Vagina (tissue), 2 donors: ENCODE measurements at regions of chr7 and their contacts with region 1.

Region 1: GRCh38 chr7:64618785-64619456 is 47.0 kb upstream of the ZNF107 start:
- DNase-seq: no peak
- H3K4me3 ChIP-seq: no peak overlapping the region
- H3K27ac ChIP-seq: no peak overlapping the region
- H3K4me1 ChIP-seq: no peaks in the 10 kb centered on the region
- H3K27me3 ChIP-seq: no peaks in the 10 kb centered on the region
- CTCF ChIP-seq: peak; percentile 44 to 69 (median 52)
- POLR2A ChIP-seq: no peak

Region 2: GRCh38 chr7:64183126-64183742 is 435.7 kb before region 1 on chr7:
- intact Hi-C with region 1: loop called (anchors 10 kb)
- DNase-seq: no peak
- H3K4me3 ChIP-seq: no peak overlapping the region
- H3K27ac ChIP-seq: no peak overlapping the region
- H3K4me1 ChIP-seq: no peaks in the 10 kb centered on the region
- H3K27me3 ChIP-seq: no peaks in the 10 kb centered on the region
- CTCF ChIP-seq: peak; percentile 28 to 60 (median 52)
- POLR2A ChIP-seq: no peak

Region 3: GRCh38 chr7:64562626-64563275 is 56.2 kb before region 1 on chr7 and contains the start of gene ZNF680:
- intact Hi-C with region 1: no loop called
- DNase-seq: peak in 1 of 2 donors; percentile 99
- H3K4me3 ChIP-seq: peak within 1 kb of the TSS; percentile 77 to 80
- H3K27ac ChIP-seq: peak within 1 kb of the TSS; percentile 86
- H3K4me1 ChIP-seq: peaks cover 46% of the 10 kb centered on the region
- H3K27me3 ChIP-seq: no peaks in the 10 kb centered on the region
- CTCF ChIP-seq: no peak
- POLR2A ChIP-seq: peak in 1 of 2 donors; percentile 61
- total RNA-seq, gene ZNF680: 22.1 TPM

Region 4: GRCh38 chr7:64581926-64582894 is 36.7 kb before region 1 on chr7:
- intact Hi-C with region 1: no loop called
- DNase-seq: no peak
- H3K4me3 ChIP-seq: no peak overlapping the region
- H3K27ac ChIP-seq: no peak overlapping the region
- H3K4me1 ChIP-seq: no peaks in the 10 kb centered on the region
- H3K27me3 ChIP-seq: no peaks in the 10 kb centered on the region
- CTCF ChIP-seq: no peak
- POLR2A ChIP-seq: no peak

Region 5: DNA sequence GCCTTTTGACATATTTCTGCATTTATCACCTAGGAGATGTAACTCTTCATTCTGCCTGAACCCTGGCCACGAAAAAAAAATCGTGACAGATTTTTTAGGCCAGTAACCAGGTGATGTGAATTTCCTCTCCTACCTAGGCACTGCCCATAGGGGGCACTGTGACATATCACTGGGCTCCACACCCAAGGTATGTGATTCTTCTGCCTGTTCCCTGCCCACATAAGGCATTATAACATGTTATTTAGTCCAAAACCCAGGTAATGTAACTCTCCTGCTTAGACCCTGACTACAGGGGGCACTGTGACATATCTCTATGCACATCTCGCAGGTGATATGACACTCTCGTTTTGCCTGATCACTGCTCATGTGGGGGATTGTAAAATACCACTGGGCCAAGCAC is 17.5 kb after region 1 on chr7:
- intact Hi-C with region 1: no loop called
- DNase-seq: no peak
- H3K4me3 ChIP-seq: no peak overlapping the region
- H3K27ac ChIP-seq: no peak overlapping the region
- H3K4me1 ChIP-seq: no peaks in the 10 kb centered on the region
- H3K27me3 ChIP-seq: no peaks in the 10 kb centered on the region
- CTCF ChIP-seq: no peak
- POLR2A ChIP-seq: no peak